Caco-2 (cell line): ENCODE measurements at regions of chr5 and their contacts with region 1.

Region 1: GRCh38 chr5:136802383-136802782 is 437.0 kb upstream of the TRPC7 start:
- DNase-seq: no peak
- H3K4me3 ChIP-seq: no peak overlapping the region
- H3K4me3 Mint-ChIP-seq: no peak overlapping the region
- H3K27ac Mint-ChIP-seq: no peak overlapping the region
- H3K4me1 ChIP-seq: no peaks in the 10 kb centered on the region
- H3K4me1 Mint-ChIP-seq: no peaks in the 10 kb centered on the region
- H3K27me3 ChIP-seq: no peaks in the 10 kb centered on the region
- H3K27me3 Mint-ChIP-seq: peaks cover 7% of the 10 kb centered on the region
- CTCF ChIP-seq: peak in 1 of 2 experiments; percentile 7

Region 2: GRCh38 chr5:136781464-136781863 is 20.9 kb before region 1 on chr5:
- CTCF ChIA-PET with region 1: no interaction called
- POLR2A ChIA-PET with region 1: no interaction called
- intact Hi-C with region 1: no loop called
- DNase-seq: no peak
- H3K4me3 ChIP-seq: no peak overlapping the region
- H3K4me3 Mint-ChIP-seq: no peak overlapping the region
- H3K27ac Mint-ChIP-seq: no peak overlapping the region
- H3K4me1 ChIP-seq: peaks cover 6% of the 10 kb centered on the region
- H3K4me1 Mint-ChIP-seq: peaks cover 4% of the 10 kb centered on the region
- H3K27me3 ChIP-seq: no peaks in the 10 kb centered on the region
- H3K27me3 Mint-ChIP-seq: peaks cover 3% of the 10 kb centered on the region
- CTCF ChIP-seq: no peak

Region 3: GRCh38 chr5:137051165-137051564 is 248.8 kb after region 1 on chr5:
- CTCF ChIA-PET with region 1: no interaction called
- POLR2A ChIA-PET with region 1: no interaction called
- intact Hi-C with region 1: loop called (anchors 5 kb)
- DNase-seq: no peak
- H3K4me3 ChIP-seq: no peak overlapping the region
- H3K4me3 Mint-ChIP-seq: no peak overlapping the region
- H3K27ac Mint-ChIP-seq: no peak overlapping the region
- H3K4me1 ChIP-seq: no peaks in the 10 kb centered on the region
- H3K4me1 Mint-ChIP-seq: no peaks in the 10 kb centered on the region
- H3K27me3 ChIP-seq: no peaks in the 10 kb centered on the region; the same call in 1 of the 2 replicates
- H3K27me3 Mint-ChIP-seq: peaks cover 3% of the 10 kb centered on the region
- CTCF ChIP-seq: peak in 1 of 2 experiments; percentile 29

Region 4: DNA sequence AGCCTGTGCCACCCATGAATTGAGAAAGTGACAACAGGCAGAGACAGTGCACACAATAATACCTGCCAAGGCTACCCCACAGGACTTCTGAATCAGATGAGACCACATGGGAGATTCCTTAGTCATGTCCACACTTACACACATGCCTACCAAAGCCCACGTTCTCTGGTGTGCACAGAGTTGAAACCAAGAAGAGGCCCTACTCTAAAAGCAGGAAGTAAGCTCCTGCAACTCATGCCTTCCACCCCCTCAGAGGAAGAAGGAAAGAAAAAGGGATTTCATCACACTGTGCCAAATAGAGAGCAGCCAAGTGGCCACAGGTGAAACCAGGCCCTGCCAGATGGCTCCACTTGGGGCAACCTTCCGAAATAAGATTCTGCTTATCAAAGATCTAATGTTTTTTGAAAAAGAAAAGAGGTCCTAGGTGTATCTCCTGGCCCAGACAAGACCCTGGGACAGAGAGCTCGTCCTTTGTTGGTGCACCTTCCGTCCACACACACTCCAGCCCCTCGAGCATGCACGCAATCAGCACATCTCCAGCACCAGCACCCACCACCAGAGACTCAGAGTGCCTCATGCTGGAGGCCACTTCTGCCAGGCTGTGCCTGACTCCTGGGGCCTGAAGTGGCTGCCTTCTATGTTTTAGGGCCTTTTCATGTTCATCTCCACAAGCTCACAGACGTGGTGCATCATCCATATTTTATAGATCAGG is 811.3 kb after region 1 on chr5:
- CTCF ChIA-PET with region 1: no interaction called
- POLR2A ChIA-PET with region 1: no interaction called
- intact Hi-C with region 1: no loop called
- DNase-seq: no peak
- H3K4me3 ChIP-seq: no peak overlapping the region
- H3K4me3 Mint-ChIP-seq: no peak overlapping the region
- H3K27ac Mint-ChIP-seq: no peak overlapping the region
- H3K4me1 ChIP-seq: no peaks in the 10 kb centered on the region
- H3K4me1 Mint-ChIP-seq: no peaks in the 10 kb centered on the region
- H3K27me3 ChIP-seq: no peaks in the 10 kb centered on the region
- H3K27me3 Mint-ChIP-seq: peaks cover 19% of the 10 kb centered on the region
- CTCF ChIP-seq: no peak